ENCODE measurements at regions of chr2 and their contacts with region 1.

Region 1: GRCh38 chr2:46002507-46002883 is 294.7 kb upstream of the EPAS1 start:
- DNase-seq: no peak
- ATAC-seq: no peak

Region 2: GRCh38 chr2:46364797-46365457 is 362.4 kb after region 1 on chr2:
- intact Hi-C with region 1: loop called in 1 of 2 experiments (anchors 10 kb)
- DNase-seq: peak in 1 of 2 donors; percentile 32
- ATAC-seq: peak; percentile 71